Esophagus muscularis mucosa (tissue), 4 donors: ENCODE measurements at regions of chr4 and their contacts with region 1.

Region 1: DNA sequence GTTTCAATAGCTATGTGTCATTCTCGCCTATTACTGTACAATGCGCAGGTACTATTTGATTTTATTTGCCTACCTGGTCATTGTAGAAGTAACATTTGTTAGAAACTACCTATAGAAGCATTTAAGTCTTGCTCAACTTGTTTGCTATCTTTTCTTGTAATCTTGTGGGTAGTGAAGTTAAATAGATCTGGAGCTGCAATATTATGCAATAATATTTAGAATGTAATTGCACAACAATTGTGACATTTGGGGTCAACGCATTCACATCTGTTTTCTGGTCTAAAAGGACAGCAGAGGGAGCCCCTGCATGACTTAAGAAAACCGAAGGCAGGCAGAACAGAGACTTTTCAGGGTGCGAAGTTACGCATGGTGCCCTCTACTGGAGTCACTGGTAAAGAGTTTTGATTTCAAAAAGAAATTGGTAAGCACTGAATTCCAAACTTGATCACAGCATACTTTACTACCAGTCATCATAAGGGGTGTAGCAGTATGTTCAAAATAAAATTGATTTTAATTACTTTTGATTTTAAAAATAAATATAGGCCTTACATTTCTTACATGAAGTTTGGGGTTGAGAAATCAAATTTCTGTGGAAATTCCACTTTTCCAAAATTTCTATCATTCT is 503.2 kb upstream of the FAM241A start:
- DNase-seq: no peak
- H3K4me3 ChIP-seq: no peak overlapping the region
- H3K27ac ChIP-seq: no peak overlapping the region
- H3K4me1 ChIP-seq: no peaks in the 10 kb centered on the region
- H3K27me3 ChIP-seq: no peaks in the 10 kb centered on the region
- CTCF ChIP-seq: peak; percentile 66 to 72 (median 66)
- EP300 ChIP-seq: no peak
- POLR2A ChIP-seq: no peak

Region 2: GRCh38 chr4:110793890-110794554 is 848.0 kb before region 1 on chr4:
- intact Hi-C with region 1: no loop called
- DNase-seq: no peak
- H3K4me3 ChIP-seq: no peak overlapping the region
- H3K27ac ChIP-seq: no peak overlapping the region
- H3K4me1 ChIP-seq: peaks cover 0 to 8% (median 3%) of the 10 kb centered on the region in 4 donors
- H3K27me3 ChIP-seq: no peaks in the 10 kb centered on the region
- CTCF ChIP-seq: no peak
- EP300 ChIP-seq: no peak
- POLR2A ChIP-seq: no peak

Region 3: GRCh38 chr4:111814961-111815360 is 172.9 kb after region 1 on chr4:
- intact Hi-C with region 1: no loop called
- DNase-seq: no peak
- H3K4me3 ChIP-seq: no peak overlapping the region
- H3K27ac ChIP-seq: no peak overlapping the region
- H3K4me1 ChIP-seq: no peaks in the 10 kb centered on the region
- H3K27me3 ChIP-seq: no peaks in the 10 kb centered on the region
- CTCF ChIP-seq: no peak
- EP300 ChIP-seq: no peak
- POLR2A ChIP-seq: no peak

Region 4: GRCh38 chr4:111854494-111855087 is 212.5 kb after region 1 on chr4:
- intact Hi-C with region 1: loop called (anchors 2 kb)
- DNase-seq: no peak
- H3K4me3 ChIP-seq: no peak overlapping the region
- H3K27ac ChIP-seq: no peak overlapping the region
- H3K4me1 ChIP-seq: no peaks in the 10 kb centered on the region
- H3K27me3 ChIP-seq: no peaks in the 10 kb centered on the region
- CTCF ChIP-seq: peak; percentile 29 to 59 (median 34)
- EP300 ChIP-seq: no peak
- POLR2A ChIP-seq: no peak

Region 5: GRCh38 chr4:111871802-111872201 is 229.7 kb after region 1 on chr4:
- intact Hi-C with region 1: no loop called
- DNase-seq: no peak
- H3K4me3 ChIP-seq: no peak overlapping the region
- H3K27ac ChIP-seq: no peak overlapping the region
- H3K4me1 ChIP-seq: no peaks in the 10 kb centered on the region
- H3K27me3 ChIP-seq: no peaks in the 10 kb centered on the region
- CTCF ChIP-seq: no peak
- EP300 ChIP-seq: no peak
- POLR2A ChIP-seq: no peak